Activated T-helper 2 cell treated with anti-CD3 and anti-CD28 coated beads, Interferon-gamma antibody, Interleukin-2, Interleukin-4, amounts not matched to agents 10 μg/mL and 5 μg/mL and 100 μg/mL, durations not matched to agents 14 hours and 24 hours and 36 hours (primary cell): ENCODE measurements at regions of chr11 and their contacts with region 1.

Region 1: GRCh38 chr11:110818032-110818687 is 105.9 kb upstream of the ARHGAP20 start:
- DNase-seq: no peak
- H3K4me3 Mint-ChIP-seq: no peak overlapping the region
- H3K27ac Mint-ChIP-seq: no peak overlapping the region
- H3K4me1 Mint-ChIP-seq: peaks cover 13% of the 10 kb centered on the region
- H3K27me3 Mint-ChIP-seq: peaks cover 8% of the 10 kb centered on the region

Region 2: DNA sequence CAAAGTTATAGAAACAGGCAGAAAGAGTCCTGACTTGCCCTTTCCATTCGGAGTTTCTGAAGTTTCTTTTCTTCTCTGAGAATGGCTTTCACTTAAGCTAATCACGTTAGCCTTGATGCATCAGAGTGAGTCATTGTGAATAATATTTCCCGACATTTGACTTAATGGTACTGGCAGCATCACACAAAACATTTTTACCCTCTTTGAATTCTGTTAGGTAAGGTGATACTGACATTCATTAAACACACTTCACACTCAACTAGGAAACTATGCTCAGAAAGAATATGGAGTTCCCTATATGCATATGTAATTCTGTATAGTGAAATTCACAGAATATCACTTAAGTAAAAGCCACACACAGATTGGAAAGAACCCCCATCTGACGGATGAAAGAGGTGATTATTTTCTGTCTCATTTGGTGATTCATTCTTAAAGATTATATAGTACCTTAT is 14.9 kb after region 1 on chr11:
- intact Hi-C with region 1: loop called (anchors 1 kb)
- DNase-seq: no peak
- H3K4me3 Mint-ChIP-seq: no peak overlapping the region
- H3K27ac Mint-ChIP-seq: peak overlapping the region; percentile 42
- H3K4me1 Mint-ChIP-seq: peaks cover 20% of the 10 kb centered on the region
- H3K27me3 Mint-ChIP-seq: no peaks in the 10 kb centered on the region